Panc1 (cell line): ENCODE measurements at regions of chr11 and their contacts with region 1.

Region 1: GRCh38 chr11:83092488-83093384 is 21.0 kb upstream of the RAB30 start:
- DNase-seq: no peak
- ATAC-seq: peak; percentile 85
- H3K4me3 ChIP-seq: no peak overlapping the region
- H3K27ac ChIP-seq: no peak overlapping the region
- H3K4me1 ChIP-seq: peaks cover 6% of the 10 kb centered on the region
- H3K27me3 ChIP-seq: no peaks in the 10 kb centered on the region
- CTCF ChIP-seq: no peak

Region 2: GRCh38 chr11:82906244-82906654 is 186.5 kb before region 1 on chr11:
- CTCF ChIA-PET with region 1: interaction called, 10 read pairs
- POLR2A ChIA-PET with region 1: interaction called, 12 read pairs
- in situ Hi-C with region 1: no loop called
- intact Hi-C with region 1: loop called (anchors 5 kb)
- DNase-seq: no peak
- ATAC-seq: no peak
- H3K4me3 ChIP-seq: no peak overlapping the region
- H3K27ac ChIP-seq: no peak overlapping the region
- H3K4me1 ChIP-seq: peaks cover 10% of the 10 kb centered on the region
- H3K27me3 ChIP-seq: no peaks in the 10 kb centered on the region
- CTCF ChIP-seq: peak; percentile 65; the same call in 1 of the 2 replicates